ENCODE measurements at regions of chr1 and their contacts with region 1.

Region 1: DNA sequence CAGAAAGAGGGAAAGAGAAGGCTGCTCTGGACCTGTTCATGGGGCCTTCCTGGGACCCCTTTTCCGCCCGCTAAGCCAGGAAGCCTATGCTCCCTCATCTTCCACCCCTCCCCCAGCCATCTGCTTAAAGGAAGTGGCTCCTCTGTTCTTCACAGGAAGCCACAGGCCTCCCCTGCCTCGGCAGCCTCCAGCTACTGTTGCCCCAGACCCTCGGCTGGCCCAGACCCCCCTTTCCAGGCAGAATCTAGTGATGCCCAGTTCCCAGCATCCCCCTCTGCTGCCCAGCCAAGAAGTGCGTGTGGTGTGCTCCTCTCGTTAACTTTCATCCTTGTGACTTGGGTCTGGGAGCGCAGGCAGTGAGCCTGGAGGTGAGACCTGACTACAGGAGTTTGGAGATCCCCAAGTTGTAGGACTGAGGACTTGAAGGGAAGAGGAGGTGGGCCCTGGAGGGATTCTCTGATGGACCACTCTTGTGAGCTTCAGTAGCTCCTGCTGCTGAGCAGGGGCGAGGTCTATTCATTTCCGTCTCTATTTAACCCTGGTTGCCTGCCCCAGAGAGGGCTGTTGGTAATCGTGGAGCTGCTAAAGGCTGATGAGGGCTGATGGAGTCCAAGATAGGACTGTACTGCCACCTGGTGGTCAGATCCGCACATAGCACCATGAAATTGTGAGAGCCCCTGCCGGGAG is 9.1 kb downstream of the IFI6 start:
- DNase-seq: peak; percentile 93
- ATAC-seq: peak; percentile 40
- H3K4me3 ChIP-seq: peak overlapping the region in 4 of 5 experiments; percentile 20 to 33 (median 24)
- H3K4me3 Mint-ChIP-seq: peak overlapping the region; percentile 81
- H3K27ac ChIP-seq: peak overlapping the region; percentile 85 to 96
- H3K27ac Mint-ChIP-seq: peak overlapping the region; percentile 99
- H3K4me1 ChIP-seq: peaks cover 42 to 52% of the 10 kb centered on the region in 2 donors
- H3K4me1 Mint-ChIP-seq: peaks cover 50% of the 10 kb centered on the region
- H3K27me3 ChIP-seq: no peaks in the 10 kb centered on the region
- H3K27me3 Mint-ChIP-seq: no peaks in the 10 kb centered on the region
- CTCF ChIP-seq: peak; percentile 89

Region 2: DNA sequence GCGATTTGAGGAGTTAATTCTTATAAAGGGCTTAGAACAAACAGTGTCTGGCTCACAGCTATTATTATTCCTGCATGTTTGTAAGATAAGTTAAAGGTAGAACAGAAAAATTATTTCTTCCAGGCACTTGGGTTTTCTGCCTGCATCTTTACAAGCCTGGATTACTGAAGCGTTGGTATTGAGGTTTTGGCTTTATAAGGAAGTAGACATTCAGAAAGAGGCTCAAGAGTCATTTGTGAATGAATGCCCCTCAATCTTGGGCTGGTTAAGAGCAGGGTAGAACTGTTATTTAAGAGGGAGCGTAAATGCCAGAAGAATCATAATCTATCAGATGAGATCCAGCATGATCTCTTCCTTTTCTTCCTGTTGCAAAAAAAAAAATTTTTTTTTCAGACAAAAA is 1044.3 kb before region 1 on chr1:
- CTCF ChIA-PET with region 1: no interaction called
- POLR2A ChIA-PET with region 1: no interaction called
- intact Hi-C with region 1: no loop called
- DNase-seq: peak; percentile 51
- ATAC-seq: no peak
- H3K4me3 ChIP-seq: no peak overlapping the region
- H3K4me3 Mint-ChIP-seq: peak overlapping the region; percentile 58
- H3K27ac ChIP-seq: no peak overlapping the region
- H3K27ac Mint-ChIP-seq: peak overlapping the region; percentile 77
- H3K4me1 ChIP-seq: peaks cover 22 to 27% of the 10 kb centered on the region in 2 donors
- H3K4me1 Mint-ChIP-seq: peaks cover 33% of the 10 kb centered on the region
- H3K27me3 ChIP-seq: no peaks in the 10 kb centered on the region
- H3K27me3 Mint-ChIP-seq: no peaks in the 10 kb centered on the region
- CTCF ChIP-seq: no peak

Region 3: GRCh38 chr1:27102707-27103491 is 560.0 kb before region 1 on chr1:
- CTCF ChIA-PET with region 1: no interaction called
- POLR2A ChIA-PET with region 1: no interaction called
- intact Hi-C with region 1: loop called (anchors 10 kb)
- DNase-seq: peak; percentile 85
- ATAC-seq: peak; percentile 46
- H3K4me3 ChIP-seq: no peak overlapping the region
- H3K4me3 Mint-ChIP-seq: no peak overlapping the region
- H3K27ac ChIP-seq: no peak overlapping the region
- H3K27ac Mint-ChIP-seq: peak overlapping the region; percentile 77
- H3K4me1 ChIP-seq: peaks cover 24 to 41% of the 10 kb centered on the region in 2 donors
- H3K4me1 Mint-ChIP-seq: peaks cover 37% of the 10 kb centered on the region
- H3K27me3 ChIP-seq: no peaks in the 10 kb centered on the region
- H3K27me3 Mint-ChIP-seq: no peaks in the 10 kb centered on the region
- CTCF ChIP-seq: peak; percentile 92

Region 4: GRCh38 chr1:27365372-27366112 is 297.3 kb before region 1 on chr1:
- CTCF ChIA-PET with region 1: interaction called, 6 read pairs
- POLR2A ChIA-PET with region 1: interaction called, 11 read pairs
- intact Hi-C with region 1: no loop called
- DNase-seq: peak; percentile 88
- ATAC-seq: peak; percentile 70
- H3K4me3 ChIP-seq: peak overlapping the region; percentile 32 to 74 (median 60)
- H3K4me3 Mint-ChIP-seq: peak overlapping the region; percentile 93
- H3K27ac ChIP-seq: no peak overlapping the region
- H3K27ac Mint-ChIP-seq: peak overlapping the region; percentile 82
- H3K4me1 ChIP-seq: peaks cover 33 to 47% of the 10 kb centered on the region in 2 donors
- H3K4me1 Mint-ChIP-seq: peaks cover 54% of the 10 kb centered on the region
- H3K27me3 ChIP-seq: no peaks in the 10 kb centered on the region
- H3K27me3 Mint-ChIP-seq: no peaks in the 10 kb centered on the region
- CTCF ChIP-seq: no peak

Region 5: GRCh38 chr1:27416387-27417111 is 246.3 kb before region 1 on chr1:
- CTCF ChIA-PET with region 1: interaction called, 14 read pairs
- POLR2A ChIA-PET with region 1: no interaction called
- intact Hi-C with region 1: loop called (anchors 5 kb)
- DNase-seq: peak; percentile 79
- ATAC-seq: peak; percentile 66
- H3K4me3 ChIP-seq: no peak overlapping the region
- H3K4me3 Mint-ChIP-seq: no peak overlapping the region
- H3K27ac ChIP-seq: peak overlapping the region; percentile 37 to 69
- H3K27ac Mint-ChIP-seq: peak overlapping the region; percentile 69
- H3K4me1 ChIP-seq: peaks cover 38 to 39% of the 10 kb centered on the region in 2 donors
- H3K4me1 Mint-ChIP-seq: peaks cover 41% of the 10 kb centered on the region
- H3K27me3 ChIP-seq: no peaks in the 10 kb centered on the region
- H3K27me3 Mint-ChIP-seq: no peaks in the 10 kb centered on the region
- CTCF ChIP-seq: peak; percentile 78

Region 6: DNA sequence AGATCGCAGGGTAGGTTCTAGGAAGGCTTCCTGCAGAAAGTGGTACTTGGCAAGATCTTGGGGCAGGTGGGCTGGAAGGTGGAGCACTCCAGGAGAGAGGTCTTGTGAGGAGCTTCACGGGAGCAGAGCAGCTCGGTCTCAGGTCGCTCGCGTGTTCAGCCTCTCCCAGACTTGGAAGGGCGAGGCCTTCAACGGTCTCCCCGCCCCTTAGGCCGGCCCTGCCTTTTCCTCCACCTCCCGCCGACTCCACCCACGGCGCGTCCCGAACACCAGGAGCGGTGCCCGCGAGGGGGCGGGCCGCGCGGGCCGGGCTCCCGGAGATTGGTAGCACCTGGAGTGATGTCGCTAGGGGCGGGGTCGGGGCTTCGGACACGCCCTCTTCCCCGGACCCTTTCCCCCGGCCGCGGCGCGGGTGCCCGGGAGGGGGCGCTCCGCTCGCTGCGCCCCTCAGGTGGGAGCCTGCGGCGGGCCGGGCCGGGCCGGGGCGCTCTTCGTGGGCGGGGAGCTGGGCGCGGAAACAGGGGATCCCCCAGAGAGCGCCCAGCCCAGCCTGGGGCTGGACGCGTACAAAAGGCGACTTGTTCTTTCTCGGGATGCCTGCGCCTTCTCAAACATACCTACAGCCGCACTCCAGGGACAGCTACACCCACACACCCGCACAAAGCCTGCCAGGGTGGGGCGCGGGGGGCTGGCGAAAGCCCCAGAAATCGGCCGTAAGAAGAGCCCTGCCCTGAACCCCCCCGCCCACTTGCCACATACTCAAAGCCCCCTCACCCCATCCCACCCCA is 94.4 kb before region 1 on chr1:
- CTCF ChIA-PET with region 1: interaction called, 13 read pairs
- POLR2A ChIA-PET with region 1: no interaction called
- intact Hi-C with region 1: loop called (anchors 1 kb)
- DNase-seq: peak; percentile 95
- ATAC-seq: peak; percentile 92
- H3K4me3 ChIP-seq: peak overlapping the region in 4 of 5 experiments; percentile 25 to 69 (median 50)
- H3K4me3 Mint-ChIP-seq: peak overlapping the region; percentile 86
- H3K27ac ChIP-seq: peak overlapping the region; percentile 27 to 68
- H3K27ac Mint-ChIP-seq: peak overlapping the region; percentile 69
- H3K4me1 ChIP-seq: peaks cover 15 to 38% of the 10 kb centered on the region in 2 donors
- H3K4me1 Mint-ChIP-seq: peaks cover 40% of the 10 kb centered on the region
- H3K27me3 ChIP-seq: no peaks in the 10 kb centered on the region
- H3K27me3 Mint-ChIP-seq: no peaks in the 10 kb centered on the region
- CTCF ChIP-seq: peak; percentile 82

Region 7: DNA sequence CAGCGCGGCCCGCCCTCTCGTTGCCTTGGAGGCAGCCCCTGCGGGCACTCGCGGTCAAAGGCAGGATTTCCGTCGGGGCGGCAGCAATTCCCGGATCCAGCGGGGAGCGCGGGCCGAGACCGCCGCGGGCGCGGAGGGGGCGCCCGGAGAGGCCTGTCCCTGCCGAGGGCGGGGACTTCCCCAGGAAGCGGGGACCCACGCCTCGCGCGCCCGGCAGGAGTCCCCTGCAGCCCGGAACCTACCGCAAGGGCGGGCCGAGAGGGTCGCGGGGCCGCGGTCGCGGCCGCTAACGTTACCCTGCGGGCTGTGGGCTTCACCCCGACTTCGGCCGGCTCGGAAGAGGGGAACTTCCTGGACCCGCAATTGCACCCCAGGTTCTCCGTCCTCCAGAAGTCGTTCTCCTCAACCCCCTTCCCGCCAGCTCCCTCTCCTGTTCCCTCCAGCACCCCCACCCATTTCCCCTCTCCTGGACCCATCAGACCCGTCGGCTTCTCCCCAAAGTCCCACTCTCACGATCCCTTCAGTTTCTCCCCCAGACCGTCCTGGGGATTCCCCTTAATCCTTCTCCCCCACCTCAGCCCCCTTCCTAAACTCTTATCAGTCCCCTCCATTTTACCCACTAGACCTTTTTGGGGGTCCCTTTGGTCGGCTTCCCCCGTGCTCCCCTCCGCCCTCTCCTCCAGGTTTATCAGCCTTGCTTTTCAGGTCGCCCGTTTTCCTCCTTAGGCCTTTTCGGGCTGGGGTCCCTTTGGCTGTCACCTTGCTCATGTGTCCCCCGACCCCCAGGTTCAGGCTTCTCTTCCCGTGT is 28.5 kb before region 1 on chr1:
- CTCF ChIA-PET with region 1: interaction called, 101 read pairs
- POLR2A ChIA-PET with region 1: interaction called, 55 read pairs
- intact Hi-C with region 1: loop called (anchors 1 kb)
- DNase-seq: peak; percentile 74
- ATAC-seq: peak; percentile 12
- H3K4me3 ChIP-seq: peak overlapping the region; percentile 68 to 78 (median 72)
- H3K4me3 Mint-ChIP-seq: peak overlapping the region; percentile 88
- H3K27ac ChIP-seq: peak overlapping the region; percentile 90
- H3K27ac Mint-ChIP-seq: peak overlapping the region; percentile 94
- H3K4me1 ChIP-seq: peaks cover 71 to 96% of the 10 kb centered on the region in 2 donors
- H3K4me1 Mint-ChIP-seq: peaks cover 81% of the 10 kb centered on the region
- H3K27me3 ChIP-seq: no peaks in the 10 kb centered on the region
- H3K27me3 Mint-ChIP-seq: no peaks in the 10 kb centered on the region
- CTCF ChIP-seq: no peak

Region 8: DNA sequence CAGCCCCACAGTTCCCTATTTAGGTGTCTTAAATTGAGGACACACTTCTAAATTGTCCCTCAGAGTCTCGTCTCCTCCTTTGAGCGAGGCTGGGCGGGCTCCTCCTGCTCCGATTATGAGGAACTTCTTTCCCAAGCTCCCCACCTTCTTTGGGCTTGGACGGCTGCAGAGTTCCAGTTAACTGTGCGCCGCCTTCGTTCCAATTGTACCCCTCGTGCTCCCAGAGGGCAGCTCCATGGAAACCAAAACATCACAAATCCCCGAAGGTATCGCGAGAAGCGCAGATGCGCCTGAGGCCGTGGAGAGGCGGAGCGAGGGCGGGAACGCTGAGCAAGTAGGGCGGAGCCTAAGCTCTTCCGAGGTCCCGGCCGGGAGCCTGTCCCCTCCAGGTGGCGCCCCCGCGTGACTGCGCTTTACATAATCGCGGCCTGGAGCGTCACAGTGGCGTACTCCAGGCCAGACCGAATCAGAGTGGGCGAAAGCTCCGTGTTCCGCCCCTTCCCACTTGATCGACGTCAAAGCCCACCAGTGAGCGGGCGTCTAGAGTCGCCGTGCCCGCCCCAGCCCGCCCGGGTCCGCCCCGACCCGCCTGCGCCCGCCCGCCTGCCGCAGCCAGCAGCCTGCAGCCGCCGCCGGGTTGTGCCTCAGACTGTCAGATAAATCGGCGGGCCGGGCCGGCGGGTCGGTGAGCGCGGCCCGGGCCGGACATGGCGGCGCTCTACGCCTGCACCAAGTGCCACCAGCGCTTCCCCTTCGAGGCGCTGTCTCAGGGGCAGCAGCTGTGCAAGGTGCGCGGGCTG is 62.7 kb after region 1 on chr1 and contains the start of gene FAM76A:
- CTCF ChIA-PET with region 1: interaction called, 4 read pairs
- POLR2A ChIA-PET with region 1: interaction called, 18 read pairs
- intact Hi-C with region 1: no loop called
- DNase-seq: peak; percentile 100
- ATAC-seq: peak; percentile 91
- H3K4me3 ChIP-seq: peak within 1 kb of the TSS; percentile 68 to 94 (median 74)
- H3K4me3 Mint-ChIP-seq: peak within 1 kb of the TSS; percentile 94
- H3K27ac ChIP-seq: peak within 1 kb of the TSS; percentile 96 to 98
- H3K27ac Mint-ChIP-seq: peak within 1 kb of the TSS; percentile 98
- H3K4me1 ChIP-seq: peaks cover 17% of the 10 kb centered on the region in 2 donors
- H3K4me1 Mint-ChIP-seq: peaks cover 25% of the 10 kb centered on the region
- H3K27me3 ChIP-seq: no peaks in the 10 kb centered on the region
- H3K27me3 Mint-ChIP-seq: no peaks in the 10 kb centered on the region
- CTCF ChIP-seq: peak; percentile 27
- total RNA-seq, gene FAM76A: 25.0 and 28.5 TPM in 2 replicates

Region 9: DNA sequence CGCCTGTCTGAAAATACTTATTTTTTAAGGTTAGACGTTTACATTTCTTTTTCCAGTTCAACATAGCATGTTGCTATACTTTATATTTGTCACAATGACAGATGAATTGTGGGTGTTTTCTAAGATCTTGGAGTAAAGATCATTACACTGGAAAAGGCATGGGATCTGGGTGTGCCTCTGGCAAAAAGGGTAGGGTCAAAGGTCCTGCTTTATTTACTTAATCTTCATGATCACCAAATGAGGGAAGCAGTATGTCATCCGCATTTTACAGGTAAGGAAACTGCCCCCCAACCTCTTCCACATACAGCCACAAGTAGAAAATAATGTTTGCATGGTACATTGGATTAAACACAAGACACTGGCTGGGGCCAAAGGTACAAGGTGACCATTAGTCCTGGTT is 259.4 kb after region 1 on chr1:
- CTCF ChIA-PET with region 1: no interaction called
- POLR2A ChIA-PET with region 1: no interaction called
- intact Hi-C with region 1: no loop called
- DNase-seq: no peak
- ATAC-seq: no peak
- H3K4me3 ChIP-seq: no peak overlapping the region
- H3K4me3 Mint-ChIP-seq: no peak overlapping the region
- H3K27ac ChIP-seq: no peak overlapping the region
- H3K27ac Mint-ChIP-seq: no peak overlapping the region
- H3K4me1 ChIP-seq: no peaks in the 10 kb centered on the region
- H3K4me1 Mint-ChIP-seq: no peaks in the 10 kb centered on the region
- H3K27me3 ChIP-seq: no peaks in the 10 kb centered on the region
- H3K27me3 Mint-ChIP-seq: peaks cover 12% of the 10 kb centered on the region
- CTCF ChIP-seq: no peak

Measured in B cell (primary cell).